ENCODE measurements at regions of chr13 and their contacts with region 1.

Region 1: GRCh38 chr13:106876349-106876748 is 308.4 kb upstream of the ARGLU1 start:
- DNase-seq: no peak
- ATAC-seq: no peak
- H3K4me3 ChIP-seq: no peak overlapping the region
- H3K27ac ChIP-seq: no peak overlapping the region
- H3K4me1 ChIP-seq: no peaks in the 10 kb centered on the region
- H3K27me3 ChIP-seq: 0 out of 2 replicates have a peak, but pooled peaks cover 5% of the 10 kb centered on the region
- CTCF ChIP-seq: no peak

Region 2: DNA sequence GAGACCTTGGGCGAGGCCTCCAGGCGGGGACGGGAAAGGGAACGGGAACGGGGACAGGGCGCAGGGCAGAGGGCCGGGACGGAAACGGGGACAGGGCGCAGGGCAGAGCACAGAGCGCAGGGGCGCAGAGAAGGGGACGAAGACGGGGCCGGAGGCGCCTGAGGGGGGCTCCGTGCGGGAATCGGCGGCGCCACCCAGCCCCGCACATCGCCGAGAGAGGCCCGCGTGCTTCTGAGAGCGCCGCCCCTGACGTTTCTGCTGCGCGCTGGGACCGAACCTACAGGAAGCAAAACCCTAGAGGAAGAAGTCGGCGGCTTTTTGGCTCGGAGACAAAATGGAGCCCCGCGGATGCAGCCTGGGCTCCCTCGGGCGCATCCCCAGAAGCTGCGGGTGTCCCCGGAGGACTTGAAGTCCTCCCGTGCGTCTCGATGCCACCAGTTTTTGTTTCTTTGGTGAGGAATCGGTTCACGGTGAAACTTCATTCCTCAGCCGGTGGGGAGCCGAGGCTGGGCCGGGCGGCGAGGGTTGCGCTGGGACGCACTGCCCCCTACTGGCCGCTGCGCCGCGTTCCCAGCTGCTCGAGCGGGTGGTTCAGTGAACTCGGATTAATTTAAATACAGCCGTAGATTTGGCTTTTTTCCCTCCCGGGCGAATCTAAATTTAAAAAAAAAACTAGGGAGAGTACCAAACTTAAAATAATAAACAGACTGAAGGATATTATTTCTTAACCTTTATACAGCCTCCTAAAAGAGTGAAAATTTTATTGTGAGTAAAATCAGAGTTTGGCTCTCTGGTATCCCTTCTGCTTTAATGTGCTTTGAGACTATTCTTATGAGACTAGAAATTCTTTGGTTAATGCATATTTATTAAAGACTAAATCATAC is 41.6 kb after region 1 on chr13:
- CTCF ChIA-PET with region 1: no interaction called
- POLR2A ChIA-PET with region 1: interaction called, 17 read pairs
- intact Hi-C with region 1: no loop called
- DNase-seq: peak; percentile 61
- ATAC-seq: peak; percentile 98
- H3K4me3 ChIP-seq: peak overlapping the region; percentile 70
- H3K27ac ChIP-seq: no peak overlapping the region
- H3K4me1 ChIP-seq: no peaks in the 10 kb centered on the region
- H3K27me3 ChIP-seq: no peaks in the 10 kb centered on the region
- CTCF ChIP-seq: peak; percentile 86